B cell (primary cell): ENCODE measurements at regions of chr15 and their contacts with region 1.

Region 1: DNA sequence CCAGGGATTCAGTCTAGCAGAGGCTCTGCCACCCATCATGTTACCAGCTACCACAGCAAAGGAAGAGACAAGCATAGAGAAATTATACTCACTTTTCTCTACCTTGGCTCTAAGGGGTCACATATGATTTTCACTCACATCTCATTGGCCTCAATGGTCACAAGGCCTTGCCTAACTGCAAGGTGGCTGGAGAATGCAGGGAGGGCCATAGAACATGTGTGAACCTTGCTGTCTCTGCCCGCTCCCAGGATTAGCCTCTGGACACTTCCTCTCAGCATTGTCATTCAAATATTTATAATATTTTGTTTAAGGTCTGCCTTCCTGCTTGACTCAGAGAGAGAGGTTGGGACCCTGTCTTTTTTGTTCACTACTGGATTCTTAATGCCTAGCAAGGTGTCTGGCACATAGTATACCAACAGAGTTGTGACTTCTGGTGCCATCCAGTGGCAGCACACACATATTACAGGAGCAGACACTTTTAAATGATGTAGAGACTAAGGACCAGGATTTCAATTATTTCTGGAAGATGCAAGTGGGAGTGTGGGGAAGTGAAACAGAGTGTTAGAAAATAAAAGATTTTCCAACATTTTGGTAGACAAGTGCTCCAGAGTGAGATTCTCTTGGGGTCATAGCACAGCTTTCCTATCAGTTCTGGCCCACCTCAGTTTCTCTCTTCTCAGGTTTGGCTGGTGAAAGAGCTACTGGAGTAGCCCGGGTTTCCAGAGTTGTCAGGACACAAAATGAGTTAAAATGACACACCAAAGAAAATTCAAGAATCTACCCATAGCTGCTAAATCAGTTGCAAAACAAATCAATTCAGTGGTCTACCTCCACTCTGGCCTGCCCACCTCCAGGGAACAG is 119.0 kb upstream of the RASGRP1 start:
- DNase-seq: peak; percentile 82
- ATAC-seq: peak; percentile 84
- H3K4me3 ChIP-seq: no peak overlapping the region
- H3K4me3 Mint-ChIP-seq: peak overlapping the region; percentile 50
- H3K27ac ChIP-seq: peak overlapping the region in 1 of 2 donors; percentile 75
- H3K27ac Mint-ChIP-seq: peak overlapping the region; percentile 64
- H3K4me1 ChIP-seq: peaks cover 20 to 24% of the 10 kb centered on the region in 2 donors
- H3K4me1 Mint-ChIP-seq: peaks cover 24% of the 10 kb centered on the region
- H3K27me3 ChIP-seq: no peaks in the 10 kb centered on the region
- H3K27me3 Mint-ChIP-seq: no peaks in the 10 kb centered on the region
- CTCF ChIP-seq: peak; percentile 93

Region 2: DNA sequence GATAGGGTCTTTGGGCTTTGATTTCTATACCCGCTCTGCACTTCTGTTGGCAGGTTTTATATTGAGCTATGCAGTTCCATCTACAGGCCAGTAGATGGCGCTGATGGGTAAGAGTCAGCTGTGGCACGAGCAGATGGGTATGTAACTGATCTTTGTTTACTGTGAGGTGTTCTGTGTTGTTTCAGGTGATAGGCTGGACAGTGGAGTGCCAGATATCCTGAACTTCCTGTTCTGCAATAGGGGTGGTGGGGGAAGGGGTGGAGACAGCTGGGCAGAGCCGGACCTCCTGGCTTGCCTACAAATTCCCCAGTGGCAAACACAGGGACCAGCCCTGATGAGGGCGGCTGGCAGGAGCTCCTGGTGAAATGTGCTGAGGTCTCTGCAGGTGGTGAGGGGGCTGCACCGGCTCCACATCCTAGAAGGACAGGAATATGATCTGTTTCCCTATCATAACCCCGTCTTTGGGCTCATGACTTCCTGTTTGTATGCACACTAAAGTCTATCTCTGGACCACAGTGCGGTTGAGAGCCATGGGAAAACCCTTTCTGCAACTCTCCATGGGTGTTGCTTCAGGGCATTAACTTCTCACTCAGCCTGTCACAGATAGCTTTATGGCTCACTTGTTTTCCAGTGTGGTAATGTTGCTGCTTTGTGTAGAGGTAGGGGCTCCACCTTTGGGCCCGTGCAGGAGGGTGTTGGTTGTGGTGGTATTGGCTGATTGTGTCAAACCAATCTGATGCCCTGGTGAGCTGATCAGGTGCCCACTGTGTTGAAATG is 243.1 kb before region 1 on chr15:
- CTCF ChIA-PET with region 1: interaction called, 222 read pairs
- POLR2A ChIA-PET with region 1: no interaction called
- intact Hi-C with region 1: no loop called
- DNase-seq: peak; percentile 76
- ATAC-seq: peak; percentile 95
- H3K4me3 ChIP-seq: no peak overlapping the region
- H3K4me3 Mint-ChIP-seq: no peak overlapping the region
- H3K27ac ChIP-seq: no peak overlapping the region
- H3K27ac Mint-ChIP-seq: no peak overlapping the region
- H3K4me1 ChIP-seq: peaks cover 0 to 5% of the 10 kb centered on the region in 2 donors
- H3K4me1 Mint-ChIP-seq: peaks cover 2% of the 10 kb centered on the region
- H3K27me3 ChIP-seq: peaks cover 0 to 2% (median 0%) of the 10 kb centered on the region in 4 experiments
- H3K27me3 Mint-ChIP-seq: peaks cover 39% of the 10 kb centered on the region
- CTCF ChIP-seq: peak; percentile 97

Region 3: GRCh38 chr15:38474155-38474757 is 209.4 kb before region 1 on chr15:
- CTCF ChIA-PET with region 1: interaction called, 145 read pairs
- POLR2A ChIA-PET with region 1: no interaction called
- intact Hi-C with region 1: loop called (anchors 1 kb)
- DNase-seq: peak; percentile 73
- ATAC-seq: peak; percentile 99
- H3K4me3 ChIP-seq: no peak overlapping the region
- H3K4me3 Mint-ChIP-seq: no peak overlapping the region
- H3K27ac ChIP-seq: no peak overlapping the region
- H3K27ac Mint-ChIP-seq: no peak overlapping the region
- H3K4me1 ChIP-seq: no peaks in the 10 kb centered on the region
- H3K4me1 Mint-ChIP-seq: peaks cover 2% of the 10 kb centered on the region
- H3K27me3 ChIP-seq: no peaks in the 10 kb centered on the region
- H3K27me3 Mint-ChIP-seq: no peaks in the 10 kb centered on the region
- CTCF ChIP-seq: peak; percentile 89

Region 4: GRCh38 chr15:38496151-38496550 is 187.5 kb before region 1 on chr15:
- CTCF ChIA-PET with region 1: interaction called, 16 read pairs
- POLR2A ChIA-PET with region 1: no interaction called
- intact Hi-C with region 1: no loop called
- DNase-seq: no peak
- ATAC-seq: no peak
- H3K4me3 ChIP-seq: no peak overlapping the region
- H3K4me3 Mint-ChIP-seq: no peak overlapping the region
- H3K27ac ChIP-seq: peak overlapping the region in 1 of 2 donors; percentile 31
- H3K27ac Mint-ChIP-seq: no peak overlapping the region
- H3K4me1 ChIP-seq: no peaks in the 10 kb centered on the region
- H3K4me1 Mint-ChIP-seq: no peaks in the 10 kb centered on the region
- H3K27me3 ChIP-seq: no peaks in the 10 kb centered on the region
- H3K27me3 Mint-ChIP-seq: no peaks in the 10 kb centered on the region
- CTCF ChIP-seq: no peak

Region 5: DNA sequence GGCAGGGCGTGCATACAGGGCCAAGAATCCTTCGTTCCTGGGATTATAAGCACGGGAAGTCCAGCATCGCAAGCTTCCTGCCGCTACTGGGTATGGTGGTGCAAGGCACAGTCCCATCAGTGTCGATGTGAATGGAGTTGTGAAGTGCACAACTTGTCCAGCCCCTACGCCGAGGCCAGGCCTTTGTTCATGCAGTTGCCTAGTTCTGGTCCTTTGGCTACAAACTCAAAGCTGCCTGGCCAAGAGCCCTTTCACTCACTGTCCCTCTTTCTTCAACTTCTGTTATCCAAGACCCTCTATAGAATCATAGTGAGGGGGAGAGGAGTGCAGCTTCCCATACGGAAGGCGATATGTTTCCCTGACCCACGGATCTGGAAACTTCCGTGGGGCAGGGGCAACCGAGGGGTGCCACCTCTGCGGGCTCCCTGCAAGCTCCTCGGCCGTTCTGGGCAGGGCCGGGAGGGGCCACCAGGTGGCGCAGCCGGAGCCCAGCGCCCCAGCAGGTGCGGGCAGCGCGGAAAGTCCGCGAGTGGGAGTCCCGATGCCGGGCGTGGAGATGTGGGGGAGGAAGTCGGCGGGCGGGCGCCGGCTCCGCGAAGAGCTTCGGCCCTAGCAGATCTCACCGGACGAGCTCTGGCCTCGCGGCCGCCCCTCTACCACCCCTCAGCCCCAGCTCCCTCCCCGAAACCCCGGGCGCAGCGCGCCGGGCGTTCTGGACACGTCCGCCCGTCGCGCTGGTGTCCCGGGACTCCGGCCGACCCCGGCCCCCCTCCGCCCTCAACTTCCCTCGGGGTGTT is 119.7 kb before region 1 on chr15:
- CTCF ChIA-PET with region 1: interaction called, 546 read pairs
- POLR2A ChIA-PET with region 1: interaction called, 23 read pairs
- intact Hi-C with region 1: loop called (anchors 1 kb)
- DNase-seq: peak; percentile 90
- ATAC-seq: peak; percentile 79
- H3K4me3 ChIP-seq: peak overlapping the region; percentile 56 to 85 (median 78)
- H3K4me3 Mint-ChIP-seq: peak overlapping the region; percentile 96
- H3K27ac ChIP-seq: peak overlapping the region; percentile 84 to 88
- H3K27ac Mint-ChIP-seq: peak overlapping the region; percentile 90
- H3K4me1 ChIP-seq: peaks cover 44 to 49% of the 10 kb centered on the region in 2 donors
- H3K4me1 Mint-ChIP-seq: peaks cover 56% of the 10 kb centered on the region
- H3K27me3 ChIP-seq: no peaks in the 10 kb centered on the region
- H3K27me3 Mint-ChIP-seq: no peaks in the 10 kb centered on the region
- CTCF ChIP-seq: peak; percentile 89

Region 6: DNA sequence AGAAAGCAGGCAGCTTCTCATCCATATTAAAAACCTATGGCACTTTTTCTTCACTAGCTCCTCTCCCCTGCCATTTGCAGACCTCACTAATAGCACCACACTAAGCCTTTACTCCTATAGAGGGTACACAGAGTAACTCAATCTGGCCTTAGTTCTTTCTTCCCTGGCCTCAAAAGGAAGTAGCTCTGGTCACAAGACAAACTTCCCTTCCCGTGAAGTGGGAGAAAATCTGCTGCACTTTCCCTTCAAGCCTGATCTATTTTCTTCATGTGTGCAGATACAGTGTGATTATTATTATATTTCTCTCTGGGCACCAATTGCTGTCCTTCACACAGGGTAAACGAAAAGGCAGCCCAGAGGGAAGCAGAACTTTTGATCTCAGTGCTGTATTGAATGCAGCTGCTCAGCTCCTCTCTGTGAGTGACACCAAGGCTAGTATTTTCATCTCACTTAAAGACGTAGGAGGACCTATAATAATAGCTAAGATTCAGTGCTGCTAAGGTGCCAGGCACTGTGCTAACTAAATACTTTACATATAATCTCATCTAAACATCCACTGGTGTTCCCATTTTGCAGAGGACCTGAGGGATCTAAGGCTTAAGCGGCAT is 57.1 kb before region 1 on chr15:
- CTCF ChIA-PET with region 1: interaction called, 12 read pairs
- POLR2A ChIA-PET with region 1: no interaction called
- intact Hi-C with region 1: no loop called
- DNase-seq: no peak
- ATAC-seq: no peak
- H3K4me3 ChIP-seq: no peak overlapping the region
- H3K4me3 Mint-ChIP-seq: no peak overlapping the region
- H3K27ac ChIP-seq: no peak overlapping the region
- H3K27ac Mint-ChIP-seq: peak overlapping the region; percentile 8
- H3K4me1 ChIP-seq: peaks cover 6 to 13% of the 10 kb centered on the region in 2 donors
- H3K4me1 Mint-ChIP-seq: peaks cover 14% of the 10 kb centered on the region
- H3K27me3 ChIP-seq: no peaks in the 10 kb centered on the region
- H3K27me3 Mint-ChIP-seq: no peaks in the 10 kb centered on the region
- CTCF ChIP-seq: no peak

Region 7: GRCh38 chr15:38671675-38672254 is 11.8 kb before region 1 on chr15:
- CTCF ChIA-PET with region 1: interaction called, 166 read pairs
- POLR2A ChIA-PET with region 1: interaction called, 5 read pairs
- intact Hi-C with region 1: loop called (anchors 1 kb)
- DNase-seq: peak; percentile 91
- ATAC-seq: peak; percentile 54
- H3K4me3 ChIP-seq: no peak overlapping the region
- H3K4me3 Mint-ChIP-seq: peak overlapping the region; percentile 59
- H3K27ac ChIP-seq: peak overlapping the region; percentile 87 to 98
- H3K27ac Mint-ChIP-seq: peak overlapping the region; percentile 91
- H3K4me1 ChIP-seq: peaks cover 54 to 58% of the 10 kb centered on the region in 2 donors
- H3K4me1 Mint-ChIP-seq: peaks cover 64% of the 10 kb centered on the region
- H3K27me3 ChIP-seq: no peaks in the 10 kb centered on the region
- H3K27me3 Mint-ChIP-seq: no peaks in the 10 kb centered on the region
- CTCF ChIP-seq: no peak